A549 (cell line): ENCODE measurements at regions of chr9 and their contacts with region 1.

Region 1: DNA sequence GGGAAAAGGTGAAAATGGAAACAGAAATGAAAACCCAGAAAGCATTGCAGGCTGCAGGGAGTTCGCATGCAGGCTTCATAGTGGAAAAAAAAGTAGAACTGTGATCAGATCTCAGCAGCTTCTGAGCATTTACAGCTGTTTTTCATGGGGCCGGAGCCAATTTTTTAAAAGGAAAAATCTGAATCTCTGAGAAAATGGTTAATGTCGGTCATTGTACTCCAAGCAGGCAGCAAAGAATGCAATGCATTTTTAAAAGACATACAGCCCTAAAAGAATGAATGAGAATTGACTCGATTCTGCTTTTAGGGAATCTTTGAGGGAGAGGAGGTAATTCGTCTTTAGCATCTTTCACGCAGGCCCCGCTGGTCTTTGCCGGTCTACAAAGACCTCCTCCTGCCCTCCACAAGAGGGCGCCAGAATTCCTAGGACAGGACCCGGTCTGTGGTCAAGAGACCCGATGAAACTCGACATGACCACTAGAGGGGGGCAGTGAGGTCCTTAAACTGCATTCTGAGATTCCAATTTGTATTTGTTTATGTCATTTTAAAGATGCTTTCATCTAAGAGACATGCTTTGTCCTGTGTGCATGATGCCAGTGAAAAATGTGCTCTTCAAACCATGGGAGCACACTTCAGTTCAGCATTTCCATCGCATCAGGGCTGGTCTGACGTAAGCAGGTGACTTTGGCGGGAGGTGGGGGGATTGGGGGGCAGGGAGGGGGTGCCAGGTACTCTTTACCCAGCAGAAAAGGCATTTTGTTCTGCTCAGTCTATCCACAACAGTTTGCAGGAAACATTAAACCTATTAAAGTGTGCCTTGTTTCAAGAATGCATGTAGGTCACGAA is 43.7 kb upstream of the TMEM252 start:
- DNase-seq: peak; percentile 55 to 88
- ATAC-seq: peak; percentile 100
- H3K4me3 ChIP-seq: no peak overlapping the region
- H3K27ac ChIP-seq: no peak overlapping the region
- H3K4me1 ChIP-seq: no peaks in the 10 kb centered on the region
- CTCF ChIP-seq: peak; percentile 99
- EP300 ChIP-seq: no peak
- POLR2A ChIP-seq: no peak
- RAD21 ChIP-seq: peak; percentile 86 to 91

Region 2: GRCh38 chr9:68500457-68501381 is 83.7 kb before region 1 on chr9:
- CTCF ChIA-PET with region 1: no interaction called
- POLR2A ChIA-PET with region 1: no interaction called
- DNase-seq: peak; percentile 27 to 80
- ATAC-seq: peak; percentile 94 to 96
- H3K4me3 ChIP-seq: no peak overlapping the region
- H3K27ac ChIP-seq: peak overlapping the region; percentile 29 to 37; a peak in 1 of 6 replicates
- H3K4me1 ChIP-seq: peaks cover 20% of the 10 kb centered on the region
- CTCF ChIP-seq: no peak
- EP300 ChIP-seq: peak in 1 of 2 experiments; percentile 30; a peak in 1 of 5 replicates
- POLR2A ChIP-seq: no peak
- RAD21 ChIP-seq: no peak

Region 3: GRCh38 chr9:68574150-68574549 is 10.3 kb before region 1 on chr9:
- CTCF ChIA-PET with region 1: interaction called, 18 read pairs
- POLR2A ChIA-PET with region 1: no interaction called
- DNase-seq: no peak
- ATAC-seq: 0 out of 6 replicates have a peak, but pooled peaks of 1 of the 2 experiments have one; percentile 29
- H3K4me3 ChIP-seq: no peak overlapping the region
- H3K27ac ChIP-seq: no peak overlapping the region
- H3K4me1 ChIP-seq: no peaks in the 10 kb centered on the region
- CTCF ChIP-seq: peak; percentile 18; the same call in 1 of the 3 replicates
- EP300 ChIP-seq: no peak
- POLR2A ChIP-seq: no peak
- RAD21 ChIP-seq: 0 out of 5 replicates have a peak, but pooled peaks of 1 of the 2 experiments have one; percentile 21

Region 4: GRCh38 chr9:68595868-68596267 is 11.5 kb after region 1 on chr9:
- CTCF ChIA-PET with region 1: interaction called, 12 read pairs
- POLR2A ChIA-PET with region 1: no interaction called
- DNase-seq: no peak
- ATAC-seq: no peak
- H3K4me3 ChIP-seq: no peak overlapping the region
- H3K27ac ChIP-seq: no peak overlapping the region
- H3K4me1 ChIP-seq: no peaks in the 10 kb centered on the region
- CTCF ChIP-seq: no peak
- EP300 ChIP-seq: no peak
- POLR2A ChIP-seq: no peak
- RAD21 ChIP-seq: no peak

Region 5: DNA sequence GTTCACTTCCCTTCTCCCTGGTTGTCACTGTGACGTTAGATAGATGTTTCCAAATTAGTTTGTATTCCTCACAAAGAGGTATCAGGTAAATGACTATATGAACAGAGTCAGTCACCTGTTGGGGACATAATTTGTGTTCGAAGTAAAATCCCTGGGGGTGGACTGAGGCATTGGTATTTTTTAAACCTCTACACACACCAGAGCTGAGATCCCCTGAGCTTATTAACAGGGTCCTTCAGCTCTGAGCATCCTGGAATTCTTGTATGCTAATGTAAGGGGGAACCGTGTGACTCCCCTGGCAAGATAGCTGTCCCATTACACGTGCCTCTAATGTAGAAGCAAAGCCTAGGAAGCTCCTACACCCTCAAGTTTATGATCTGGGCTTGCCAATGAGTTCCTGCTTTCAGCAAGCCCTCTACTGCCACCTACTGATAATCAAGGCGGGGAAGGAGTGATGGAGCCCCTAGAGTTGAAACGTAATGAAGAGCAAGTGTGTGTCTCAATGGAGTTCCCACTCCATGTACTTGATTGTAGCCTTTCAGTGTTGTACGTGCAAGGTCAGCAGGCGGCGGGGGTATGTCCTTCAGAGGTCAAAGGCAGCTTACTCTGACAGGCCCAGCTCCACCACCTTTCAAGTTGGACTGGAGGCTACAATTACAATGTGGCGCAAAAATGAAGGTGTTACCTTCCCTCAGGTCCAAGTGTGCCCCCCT is 415.1 kb after region 1 on chr9:
- CTCF ChIA-PET with region 1: interaction called, 18 read pairs
- POLR2A ChIA-PET with region 1: no interaction called
- DNase-seq: peak; percentile 54 to 69
- ATAC-seq: peak; percentile 93 to 97
- H3K4me3 ChIP-seq: no peak overlapping the region
- H3K27ac ChIP-seq: no peak overlapping the region
- H3K4me1 ChIP-seq: no peaks in the 10 kb centered on the region
- CTCF ChIP-seq: peak; percentile 71
- EP300 ChIP-seq: no peak
- POLR2A ChIP-seq: no peak
- RAD21 ChIP-seq: peak; percentile 68 to 78

Region 6: GRCh38 chr9:69004836-69005235 is 420.4 kb after region 1 on chr9:
- CTCF ChIA-PET with region 1: interaction called, 18 read pairs
- POLR2A ChIA-PET with region 1: no interaction called
- DNase-seq: no peak
- ATAC-seq: no peak
- H3K4me3 ChIP-seq: no peak overlapping the region
- H3K27ac ChIP-seq: no peak overlapping the region
- H3K4me1 ChIP-seq: no peaks in the 10 kb centered on the region
- CTCF ChIP-seq: no peak
- EP300 ChIP-seq: no peak
- POLR2A ChIP-seq: no peak
- RAD21 ChIP-seq: no peak